Activated B cell treated with CpG ODN at 0.5 μM for 24 hours (primary cell): ENCODE measurements at regions of chr16 and their contacts with region 1.

Region 1: GRCh38 chr16:88452482-88453216 is 431 bp upstream of the ZFPM1 start:
- DNase-seq: peak; percentile 100
- ATAC-seq: peak; percentile 71
- H3K4me3 Mint-ChIP-seq: peak overlapping the region; percentile 87
- H3K27ac Mint-ChIP-seq: peak overlapping the region; percentile 80
- H3K4me1 Mint-ChIP-seq: peaks cover 57% of the 10 kb centered on the region
- H3K27me3 Mint-ChIP-seq: no peaks in the 10 kb centered on the region
- CTCF ChIP-seq: no peak

Region 2: DNA sequence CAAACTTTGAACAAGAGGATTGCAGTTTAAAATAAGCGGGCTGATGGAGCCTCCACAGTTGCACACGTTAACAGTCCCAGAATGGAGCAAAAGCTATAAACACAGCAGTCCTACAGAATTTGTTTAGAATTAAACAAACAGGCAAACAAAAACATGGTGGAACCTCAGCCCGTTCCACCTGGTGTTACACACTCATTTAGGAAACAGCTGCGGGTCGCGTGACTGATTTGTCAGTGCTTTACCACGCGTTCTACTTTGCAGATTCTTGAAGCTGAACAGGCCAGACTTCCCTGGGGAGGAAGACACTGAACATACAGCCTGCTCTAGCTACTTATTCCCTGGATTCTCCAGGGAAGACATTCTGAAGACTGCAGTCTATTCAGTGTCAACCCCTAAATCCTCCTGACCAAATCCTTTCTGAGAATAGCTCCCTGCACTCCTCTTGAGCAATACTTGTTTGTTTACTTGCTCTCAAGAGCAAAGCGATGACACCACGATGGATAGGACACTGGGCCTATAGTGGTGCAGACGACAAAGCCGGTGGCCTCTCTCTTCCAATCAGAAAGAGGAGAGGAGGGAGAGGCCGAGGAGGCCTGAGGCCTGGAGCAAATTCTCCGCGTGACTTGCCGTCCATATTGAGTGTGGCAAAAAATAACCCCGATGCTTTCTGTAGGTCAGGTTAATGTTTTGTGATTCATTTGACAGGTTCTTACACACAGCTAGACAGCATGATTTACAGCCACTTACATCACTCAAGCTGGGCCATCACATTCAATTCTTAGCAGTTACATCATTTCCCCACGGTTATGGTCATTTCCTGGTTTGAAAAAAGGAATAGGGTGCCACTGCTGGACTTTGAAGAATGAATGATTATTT is 1064.5 kb before region 1 on chr16:
- CTCF ChIA-PET with region 1: no interaction called
- POLR2A ChIA-PET with region 1: no interaction called
- intact Hi-C with region 1: loop called (anchors 2 kb)
- DNase-seq: peak; percentile 59
- ATAC-seq: peak; percentile 62
- H3K4me3 Mint-ChIP-seq: peak overlapping the region; percentile 70
- H3K27ac Mint-ChIP-seq: peak overlapping the region; percentile 98
- H3K4me1 Mint-ChIP-seq: peaks cover 52% of the 10 kb centered on the region
- H3K27me3 Mint-ChIP-seq: peaks cover 2% of the 10 kb centered on the region
- CTCF ChIP-seq: no peak

Region 3: GRCh38 chr16:88468275-88469141 is 15.9 kb after region 1 on chr16:
- CTCF ChIA-PET with region 1: interaction called, 3 read pairs
- POLR2A ChIA-PET with region 1: interaction called, 23 read pairs
- intact Hi-C with region 1: loop called (anchors 1 kb)
- DNase-seq: no peak
- ATAC-seq: peak; percentile 38
- H3K4me3 Mint-ChIP-seq: no peak overlapping the region
- H3K27ac Mint-ChIP-seq: no peak overlapping the region
- H3K4me1 Mint-ChIP-seq: peaks cover 65% of the 10 kb centered on the region
- H3K27me3 Mint-ChIP-seq: no peaks in the 10 kb centered on the region
- CTCF ChIP-seq: no peak

Region 4: DNA sequence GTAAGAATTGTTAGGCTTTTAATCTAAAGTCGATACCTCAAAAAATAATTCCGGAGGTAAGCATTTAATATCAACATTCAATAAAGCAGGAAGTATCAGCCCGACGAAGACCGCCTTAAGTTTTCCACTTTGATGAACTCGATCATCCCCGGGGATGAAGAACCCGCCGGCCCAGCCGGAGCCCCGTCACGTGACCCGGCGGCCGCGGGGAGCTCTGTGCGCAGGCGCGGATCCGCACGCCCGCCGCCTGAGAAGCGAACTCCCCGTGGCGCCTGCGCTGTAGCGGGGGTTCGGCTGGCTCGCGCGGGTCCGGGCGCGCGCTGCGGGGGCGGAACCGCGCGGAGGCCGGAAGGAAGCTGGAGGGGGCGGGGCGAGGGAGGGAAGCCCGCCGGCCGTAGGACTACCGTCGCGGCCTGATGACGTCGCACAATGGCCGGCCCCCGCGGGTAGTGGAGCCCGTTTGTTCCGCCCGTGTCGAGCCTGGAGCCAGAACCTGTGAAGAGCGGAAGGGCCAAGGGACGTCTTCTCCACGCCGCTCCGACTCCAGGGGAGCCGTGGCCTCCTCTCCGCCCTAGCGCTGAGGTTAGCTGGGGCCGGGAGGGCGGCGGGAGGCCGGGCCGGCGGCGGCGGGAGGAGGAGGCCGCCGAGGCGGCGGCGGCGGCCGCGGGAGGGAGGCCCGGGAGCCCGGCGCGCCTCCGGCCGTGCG is 117.5 kb after region 1 on chr16 and contains the start of gene ZC3H18:
- CTCF ChIA-PET with region 1: no interaction called
- POLR2A ChIA-PET with region 1: interaction called, 10 read pairs
- intact Hi-C with region 1: loop called (anchors 1 kb)
- DNase-seq: peak; percentile 99
- ATAC-seq: peak; percentile 92
- H3K4me3 Mint-ChIP-seq: peak within 1 kb of the TSS; percentile 86
- H3K27ac Mint-ChIP-seq: peak within 1 kb of the TSS; percentile 76
- H3K4me1 Mint-ChIP-seq: peaks cover 25% of the 10 kb centered on the region
- H3K27me3 Mint-ChIP-seq: no peaks in the 10 kb centered on the region
- CTCF ChIP-seq: no peak
- total RNA-seq, gene ZC3H18: 61.7 and 74.2 TPM in 2 replicates

Region 5: GRCh38 chr16:88686439-88687253 is 234.0 kb after region 1 on chr16 and contains the start of gene SNAI3:
- CTCF ChIA-PET with region 1: no interaction called
- POLR2A ChIA-PET with region 1: no interaction called
- intact Hi-C with region 1: loop called (anchors 10 kb)
- DNase-seq: peak; percentile 94
- ATAC-seq: peak; percentile 74
- H3K4me3 Mint-ChIP-seq: peak within 1 kb of the TSS; percentile 83
- H3K27ac Mint-ChIP-seq: no peak within 1 kb of the TSS
- H3K4me1 Mint-ChIP-seq: peaks cover 46% of the 10 kb centered on the region
- H3K27me3 Mint-ChIP-seq: no peaks in the 10 kb centered on the region
- CTCF ChIP-seq: no peak
- total RNA-seq, gene SNAI3: 1.5 and 2.7 TPM in 2 replicates

Region 6: GRCh38 chr16:88770461-88771293 is 318.0 kb after region 1 on chr16:
- CTCF ChIA-PET with region 1: no interaction called
- POLR2A ChIA-PET with region 1: no interaction called
- intact Hi-C with region 1: no loop called
- DNase-seq: peak; percentile 43
- ATAC-seq: peak; percentile 54
- H3K4me3 Mint-ChIP-seq: peak overlapping the region; percentile 19
- H3K27ac Mint-ChIP-seq: peak overlapping the region; percentile 35
- H3K4me1 Mint-ChIP-seq: peaks cover 61% of the 10 kb centered on the region
- H3K27me3 Mint-ChIP-seq: no peaks in the 10 kb centered on the region
- CTCF ChIP-seq: no peak

Region 7: DNA sequence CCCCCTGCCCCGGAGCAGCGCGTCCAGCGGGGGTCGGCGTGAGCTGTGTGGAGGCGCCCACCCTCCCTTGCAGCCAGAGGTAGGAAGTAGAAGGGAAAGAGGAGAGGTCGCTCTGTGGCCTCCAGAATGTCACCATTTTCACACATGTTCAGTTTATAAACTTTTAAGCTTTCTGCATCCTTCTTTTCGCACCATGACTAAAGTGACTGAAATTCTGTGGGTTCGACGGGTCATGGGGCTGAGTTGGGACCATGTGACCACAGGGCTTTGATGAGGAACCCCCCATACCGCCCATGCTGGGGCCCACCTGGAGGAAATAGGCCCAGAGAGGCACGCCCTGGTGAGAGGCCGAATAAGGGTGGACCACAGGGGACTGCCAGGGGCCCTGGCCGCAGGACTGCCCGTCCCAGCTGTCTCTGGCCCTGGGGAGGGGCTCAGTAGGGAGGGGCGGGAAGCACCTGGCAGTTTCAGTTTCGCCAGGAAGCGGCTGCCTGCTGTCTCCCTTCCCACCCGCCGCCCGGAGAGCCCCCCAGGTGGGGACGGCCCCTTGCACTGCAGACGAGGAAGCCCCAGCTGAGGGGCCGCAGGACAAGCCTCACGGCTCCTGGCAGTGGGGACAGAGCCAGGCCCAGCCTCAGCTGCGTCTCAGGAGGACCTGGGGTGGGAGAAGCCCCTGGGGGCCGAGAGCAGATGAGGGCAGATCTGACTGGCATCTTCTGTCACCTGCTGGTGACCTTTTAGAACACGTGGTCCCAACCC is 515.4 kb after region 1 on chr16:
- CTCF ChIA-PET with region 1: no interaction called
- POLR2A ChIA-PET with region 1: no interaction called
- intact Hi-C with region 1: loop called (anchors 2 kb)
- DNase-seq: peak; percentile 85
- ATAC-seq: peak; percentile 80
- H3K4me3 Mint-ChIP-seq: peak overlapping the region; percentile 75
- H3K27ac Mint-ChIP-seq: peak overlapping the region; percentile 86
- H3K4me1 Mint-ChIP-seq: peaks cover 86% of the 10 kb centered on the region
- H3K27me3 Mint-ChIP-seq: no peaks in the 10 kb centered on the region
- CTCF ChIP-seq: no peak